AG04450 (cell line): ENCODE measurements at regions of chr7 and their contacts with region 1.

Region 1: DNA sequence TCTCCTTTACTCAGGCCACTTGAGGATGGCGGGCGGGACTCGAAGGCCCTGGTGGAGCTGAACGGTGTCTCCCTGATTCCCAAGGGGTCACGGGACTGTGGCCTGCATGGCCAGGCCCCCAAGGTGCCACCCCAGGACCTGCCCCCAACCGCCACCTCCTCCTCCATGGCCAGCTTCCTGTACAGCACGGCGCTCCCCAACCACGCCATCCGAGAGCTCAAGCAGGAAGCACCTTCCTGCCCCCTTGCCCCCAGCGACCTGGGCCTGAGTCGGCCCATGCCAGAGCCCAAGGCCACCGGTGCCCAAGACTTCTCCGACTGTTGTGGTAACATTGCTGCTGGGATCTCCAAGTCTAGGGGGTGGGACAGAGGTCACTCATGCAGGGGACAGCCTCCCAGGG is 65.7 kb downstream of the GTF2IRD1 start:
- DNase-seq: no peak
- H3K4me3 ChIP-seq: no peak overlapping the region
- H3K27ac ChIP-seq: no peak overlapping the region
- H3K27me3 ChIP-seq: no peaks in the 10 kb centered on the region
- CTCF ChIP-seq: no peak

Region 2: GRCh38 chr7:74133671-74134048 is 385.7 kb before region 1 on chr7:
- CTCF ChIA-PET with region 1: no interaction called
- POLR2A ChIA-PET with region 1: no interaction called
- DNase-seq: no peak
- H3K4me3 ChIP-seq: no peak overlapping the region
- H3K27ac ChIP-seq: no peak overlapping the region
- H3K27me3 ChIP-seq: no peaks in the 10 kb centered on the region
- CTCF ChIP-seq: no peak

Region 3: GRCh38 chr7:74604326-74605020 is 85.1 kb after region 1 on chr7:
- CTCF ChIA-PET with region 1: no interaction called
- POLR2A ChIA-PET with region 1: interaction called, 14 read pairs
- DNase-seq: no peak
- H3K4me3 ChIP-seq: no peak overlapping the region
- H3K27ac ChIP-seq: no peak overlapping the region
- H3K27me3 ChIP-seq: no peaks in the 10 kb centered on the region
- CTCF ChIP-seq: no peak